Activated CD8-positive, alpha-beta T cell treated with anti-CD3 and anti-CD28 coated beads for 36 hours (primary cell): ENCODE measurements at regions of chr17 and their contacts with region 1.

Region 1: DNA sequence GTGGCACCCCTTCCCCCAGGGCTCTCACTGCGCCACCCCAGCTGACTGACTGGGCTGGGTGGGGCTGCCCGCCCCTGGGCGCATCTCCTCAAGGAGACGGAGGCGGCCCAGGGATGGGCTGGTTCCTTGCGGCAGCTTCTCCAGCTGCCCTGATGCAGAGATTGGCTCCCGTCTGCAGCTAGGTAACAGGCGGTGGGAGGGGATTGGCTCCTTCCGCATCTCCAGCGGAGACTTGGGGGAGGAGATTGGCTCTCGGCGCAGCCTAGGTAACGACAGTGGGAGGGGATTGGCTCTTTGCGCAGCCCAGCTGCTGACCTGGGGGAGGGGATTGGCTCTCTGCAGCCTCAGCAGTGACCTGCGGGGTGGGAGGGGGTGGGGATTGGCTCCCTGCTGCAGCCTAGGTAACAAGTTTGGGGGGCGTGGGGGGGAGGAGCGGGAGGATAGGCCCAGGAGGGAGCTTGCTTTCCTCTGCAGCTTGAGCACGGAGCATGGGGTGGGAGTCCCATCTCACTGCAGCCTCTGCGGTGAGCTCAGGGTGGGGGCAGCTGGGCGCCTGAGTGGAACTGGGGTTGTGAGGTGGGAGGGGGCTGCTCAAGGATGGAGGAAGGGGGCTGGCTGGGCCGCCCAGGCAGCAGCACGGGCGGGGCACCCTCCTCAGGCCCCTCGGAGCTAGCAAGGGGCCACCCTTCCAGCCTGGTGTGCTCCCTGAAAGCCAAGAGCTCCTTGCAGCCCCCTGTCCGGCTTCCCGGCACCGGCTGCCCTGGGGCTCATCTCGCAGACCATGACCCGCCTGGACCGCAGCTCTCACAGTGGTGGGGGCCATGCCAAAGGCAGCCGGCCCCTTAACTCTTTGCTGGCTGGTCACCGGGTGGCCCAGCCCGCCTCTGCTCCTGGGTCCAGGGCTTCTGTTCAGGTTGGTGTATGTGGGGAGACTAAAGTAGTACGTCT is 6.4 kb downstream of the NFE2L1 start:
- DNase-seq: no peak
- ATAC-seq: no peak
- H3K4me3 Mint-ChIP-seq: peak overlapping the region; percentile 61
- H3K27ac Mint-ChIP-seq: peak overlapping the region; percentile 99
- H3K4me1 Mint-ChIP-seq: peaks cover 64% of the 10 kb centered on the region
- H3K27me3 Mint-ChIP-seq: no peaks in the 10 kb centered on the region
- CTCF ChIP-seq: no peak

Region 2: DNA sequence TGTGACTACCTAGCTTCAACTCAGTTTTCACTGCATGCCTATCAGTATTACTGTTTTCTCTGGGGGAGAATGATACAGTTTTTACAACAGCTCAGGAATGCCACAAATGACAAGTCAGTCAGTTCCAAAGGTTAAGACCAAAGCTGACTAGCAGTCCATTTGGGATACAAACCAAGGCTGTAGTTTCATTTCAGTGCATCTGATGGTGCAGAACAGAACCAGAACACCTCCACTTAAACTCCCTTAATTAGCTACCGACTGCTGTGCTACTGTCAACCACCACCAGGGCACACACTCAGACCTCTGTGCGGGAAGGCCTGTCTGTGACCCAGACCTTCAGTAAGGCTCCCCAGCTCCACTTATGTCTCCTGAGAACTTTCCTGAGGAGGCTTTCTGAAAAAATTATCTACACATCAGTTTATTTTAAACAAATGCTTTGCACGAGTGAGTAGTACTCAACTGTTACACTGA is 14.0 kb after region 1 on chr17:
- CTCF ChIA-PET with region 1: interaction called, 186 read pairs
- POLR2A ChIA-PET with region 1: interaction called, 15 read pairs
- intact Hi-C with region 1: no loop called
- DNase-seq: peak; percentile 38
- ATAC-seq: peak; percentile 61
- H3K4me3 Mint-ChIP-seq: no peak overlapping the region
- H3K27ac Mint-ChIP-seq: no peak overlapping the region
- H3K4me1 Mint-ChIP-seq: no peaks in the 10 kb centered on the region
- H3K27me3 Mint-ChIP-seq: no peaks in the 10 kb centered on the region
- CTCF ChIP-seq: peak; percentile 49